GM12878 (cell line): ENCODE measurements at regions of chr18 and their contacts with region 1.

Region 1: DNA sequence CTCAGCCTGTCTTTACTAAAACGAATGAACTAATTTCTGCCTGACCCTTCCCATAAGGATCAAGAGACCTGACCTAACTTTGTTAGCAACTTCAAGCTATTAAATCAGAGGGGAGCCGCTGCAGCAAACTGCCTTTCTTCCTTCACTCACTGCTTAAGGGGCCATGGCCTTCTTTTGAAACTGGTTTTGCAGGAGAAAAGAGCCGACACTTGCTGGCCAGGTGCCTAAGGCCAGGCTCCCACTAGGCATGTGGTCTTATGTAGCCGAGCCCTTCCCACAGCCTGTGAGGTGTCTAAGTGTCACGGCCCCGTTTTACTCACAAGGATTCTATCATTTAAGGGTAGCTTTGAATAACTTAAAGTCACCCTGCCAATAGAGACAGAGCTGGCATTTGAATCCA is 130.8 kb downstream of the ZNF236 start:
- DNase-seq: no peak
- ATAC-seq: no peak
- H3K4me3 ChIP-seq: no peak overlapping the region
- H3K27ac ChIP-seq: no peak overlapping the region
- H3K4me1 ChIP-seq: no peaks in the 10 kb centered on the region
- H3K27me3 ChIP-seq: no peaks in the 10 kb centered on the region
- CTCF ChIP-seq: no peak
- EP300 ChIP-seq: no peak
- POLR2A ChIP-seq: no peak
- RAD21 ChIP-seq: no peak

Region 2: GRCh38 chr18:76963936-76964335 is 10.8 kb after region 1 on chr18:
- CTCF ChIA-PET with region 1: interaction called, 5 read pairs
- POLR2A ChIA-PET with region 1: interaction called, 3 read pairs
- RAD21 ChIA-PET with region 1: interaction called, 13 read pairs
- SMC1A ChIA-PET with region 1: interaction called, 9 read pairs
- in situ Hi-C with region 1: no loop called
- intact Hi-C with region 1: no loop called
- DNase-seq: no peak
- ATAC-seq: peak; percentile 63
- H3K4me3 ChIP-seq: 0 out of 2 replicates have a peak overlapping the region, but pooled peaks have one; percentile 17
- H3K27ac ChIP-seq: peak overlapping the region; percentile 46
- H3K4me1 ChIP-seq: peaks cover 21% of the 10 kb centered on the region
- H3K27me3 ChIP-seq: no peaks in the 10 kb centered on the region
- CTCF ChIP-seq: no peak
- EP300 ChIP-seq: no peak
- POLR2A ChIP-seq: no peak
- RAD21 ChIP-seq: no peak